B cell (primary cell): ENCODE measurements at regions of chr16 and their contacts with region 1.

Region 1: DNA sequence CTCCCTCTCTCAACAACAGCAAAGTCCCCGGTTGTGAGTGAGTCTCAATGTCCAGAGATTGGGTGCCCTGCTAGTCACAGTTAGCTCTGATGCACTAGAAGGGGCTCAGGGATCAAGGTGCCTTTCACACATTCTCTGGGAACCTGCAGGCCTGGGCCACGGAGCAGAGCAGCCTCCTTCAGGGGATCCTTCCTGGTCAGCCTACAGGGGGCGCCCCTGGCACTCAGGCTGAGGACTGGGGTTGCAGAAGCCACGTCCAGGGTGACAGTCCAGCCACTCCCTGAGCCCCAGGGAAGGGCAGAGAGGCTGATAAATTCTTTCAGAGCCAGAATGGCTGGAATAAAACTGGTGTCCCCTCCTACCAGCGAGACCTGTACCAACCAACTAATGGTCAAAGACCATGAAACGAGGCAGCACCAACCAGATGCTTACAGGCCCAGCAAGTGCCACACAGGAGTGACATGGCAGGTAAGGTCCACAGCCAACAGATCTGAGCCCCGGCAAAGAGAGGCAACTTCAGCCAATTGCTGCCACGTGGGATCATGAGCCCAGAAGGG is 43.5 kb downstream of the ST3GAL2 start:
- DNase-seq: peak; percentile 71
- ATAC-seq: peak; percentile 88
- H3K4me3 ChIP-seq: no peak overlapping the region
- H3K4me3 Mint-ChIP-seq: no peak overlapping the region
- H3K27ac ChIP-seq: no peak overlapping the region
- H3K27ac Mint-ChIP-seq: no peak overlapping the region
- H3K4me1 ChIP-seq: peaks cover 0 to 5% of the 10 kb centered on the region in 2 donors
- H3K4me1 Mint-ChIP-seq: peaks cover 4% of the 10 kb centered on the region
- H3K27me3 ChIP-seq: no peaks in the 10 kb centered on the region
- H3K27me3 Mint-ChIP-seq: no peaks in the 10 kb centered on the region
- CTCF ChIP-seq: peak; percentile 74

Region 2: GRCh38 chr16:70470927-70471341 is 75.5 kb after region 1 on chr16:
- CTCF ChIA-PET with region 1: interaction called, 12 read pairs
- POLR2A ChIA-PET with region 1: no interaction called
- intact Hi-C with region 1: loop called (anchors 5 kb)
- DNase-seq: no peak
- ATAC-seq: no peak
- H3K4me3 ChIP-seq: no peak overlapping the region
- H3K4me3 Mint-ChIP-seq: no peak overlapping the region
- H3K27ac ChIP-seq: no peak overlapping the region
- H3K27ac Mint-ChIP-seq: no peak overlapping the region
- H3K4me1 ChIP-seq: no peaks in the 10 kb centered on the region
- H3K4me1 Mint-ChIP-seq: no peaks in the 10 kb centered on the region
- H3K27me3 ChIP-seq: no peaks in the 10 kb centered on the region
- H3K27me3 Mint-ChIP-seq: no peaks in the 10 kb centered on the region
- CTCF ChIP-seq: no peak